ENCODE measurements at regions of chr15 and their contacts with region 1.

Region 1: DNA sequence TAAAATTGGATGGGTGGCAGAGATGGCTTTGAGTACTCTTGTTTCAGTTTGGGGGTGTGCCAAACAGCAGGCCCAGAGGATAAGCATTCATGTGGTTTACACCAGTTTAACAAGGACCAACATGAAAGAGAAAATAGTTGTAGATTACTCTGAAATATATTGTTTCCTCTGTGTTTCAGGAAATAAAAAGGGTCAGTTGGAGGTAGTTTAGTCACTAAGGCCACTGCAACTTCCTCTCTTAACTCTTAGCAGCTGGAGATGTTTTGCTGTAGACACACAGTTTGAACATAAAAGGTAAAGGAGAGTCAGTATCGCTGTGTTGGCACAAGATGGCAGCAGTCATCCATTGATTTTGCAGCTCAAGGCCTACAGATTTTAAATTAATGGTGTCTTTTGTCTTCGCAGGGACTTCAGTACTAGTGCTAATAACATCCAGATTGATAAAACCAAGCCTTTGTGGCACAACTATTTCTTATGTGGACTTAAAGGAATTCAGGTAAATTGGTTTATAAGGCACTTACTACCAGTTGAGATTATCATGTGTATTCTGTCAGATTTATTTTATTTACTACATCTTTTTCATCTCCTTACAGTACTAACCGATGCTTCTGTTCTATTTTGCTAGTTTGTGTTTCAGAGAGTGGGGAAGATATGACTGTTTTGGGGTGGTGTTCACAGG is 65.5 kb downstream of the GALK2 start:
- DNase-seq: peak; percentile 92
- ATAC-seq: peak; percentile 88
- H3K4me3 ChIP-seq: no peak overlapping the region
- H3K27ac ChIP-seq: peak overlapping the region; percentile 70; the same call in 1 of the 2 replicates
- H3K4me1 ChIP-seq: peaks cover 3% of the 10 kb centered on the region
- H3K27me3 ChIP-seq: no peaks in the 10 kb centered on the region
- CTCF ChIP-seq: peak; percentile 91
- POLR2A ChIP-seq: no peak
- RAD21 ChIP-seq: peak; percentile 94

Region 2: GRCh38 chr15:49075885-49076284 is 159.7 kb before region 1 on chr15:
- CTCF ChIA-PET with region 1: no interaction called
- POLR2A ChIA-PET with region 1: no interaction called
- dilution Hi-C with region 1: no loop called
- in situ Hi-C with region 1: no loop called
- intact Hi-C with region 1: no loop called
- DNase-seq: no peak
- ATAC-seq: no peak; the same call in 1 of the 2 replicates
- H3K4me3 ChIP-seq: no peak overlapping the region
- H3K27ac ChIP-seq: no peak overlapping the region
- H3K4me1 ChIP-seq: no peaks in the 10 kb centered on the region; the same call in 1 of the 2 replicates
- H3K27me3 ChIP-seq: no peaks in the 10 kb centered on the region
- CTCF ChIP-seq: no peak
- POLR2A ChIP-seq: no peak
- RAD21 ChIP-seq: no peak

Region 3: DNA sequence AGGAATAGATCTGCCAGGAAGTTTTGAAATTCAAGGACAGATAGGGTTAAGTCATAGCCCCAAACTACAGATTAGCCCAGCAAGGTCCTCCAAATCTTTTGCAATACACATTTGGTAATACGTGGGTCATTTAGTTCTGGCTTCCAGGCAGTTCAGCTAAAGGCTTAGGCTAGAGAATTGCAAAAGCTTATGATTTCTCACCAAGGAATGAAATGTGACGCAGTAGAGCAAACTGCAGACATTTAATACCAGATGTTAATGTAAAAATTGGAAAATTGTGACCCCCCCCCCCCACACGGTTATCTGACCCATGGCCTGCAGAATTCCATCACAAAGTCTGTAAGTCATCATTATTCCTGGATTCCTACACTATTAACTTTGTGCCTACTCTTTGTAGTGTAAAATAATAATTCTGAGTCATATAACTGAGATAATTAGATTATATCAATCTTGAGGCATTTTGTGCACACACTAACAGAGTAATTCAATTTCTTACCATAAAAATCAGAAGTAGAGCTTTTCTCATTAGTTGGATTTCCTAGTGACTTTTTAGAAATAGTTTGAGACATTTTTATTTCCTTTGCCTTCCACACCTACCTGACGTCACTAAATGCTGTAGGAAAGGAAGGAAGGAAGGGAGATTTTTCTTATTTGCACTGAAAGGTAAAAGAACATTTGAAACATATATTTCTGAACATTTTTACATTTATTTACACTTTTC is 620.5 kb after region 1 on chr15:
- CTCF ChIA-PET with region 1: no interaction called
- POLR2A ChIA-PET with region 1: no interaction called
- dilution Hi-C with region 1: no loop called
- in situ Hi-C with region 1: no loop called
- intact Hi-C with region 1: loop called (anchors 10 kb)
- DNase-seq: peak; percentile 99
- ATAC-seq: peak; percentile 74
- H3K4me3 ChIP-seq: no peak overlapping the region
- H3K27ac ChIP-seq: peak overlapping the region; percentile 100; the same call in 1 of the 2 replicates
- H3K4me1 ChIP-seq: peaks cover 24% of the 10 kb centered on the region
- H3K27me3 ChIP-seq: no peaks in the 10 kb centered on the region
- CTCF ChIP-seq: no peak
- POLR2A ChIP-seq: no peak
- RAD21 ChIP-seq: peak; percentile 17; the same call in 1 of the 2 replicates

Region 4: GRCh38 chr15:50315814-50316630 is 1080.4 kb after region 1 on chr15:
- CTCF ChIA-PET with region 1: no interaction called
- POLR2A ChIA-PET with region 1: interaction called, 3 read pairs
- dilution Hi-C with region 1: no loop called
- in situ Hi-C with region 1: loop called (anchors 25 kb)
- intact Hi-C with region 1: loop called (anchors 10 kb)
- DNase-seq: peak; percentile 68
- ATAC-seq: peak; percentile 81
- H3K4me3 ChIP-seq: no peak overlapping the region
- H3K27ac ChIP-seq: no peak overlapping the region
- H3K4me1 ChIP-seq: peaks cover 2% of the 10 kb centered on the region; the same call in 1 of the 2 replicates
- H3K27me3 ChIP-seq: no peaks in the 10 kb centered on the region
- CTCF ChIP-seq: peak; percentile 71
- POLR2A ChIP-seq: no peak
- RAD21 ChIP-seq: peak; percentile 77